ENCODE measurements at regions of chr9 and their contacts with region 1.

Region 1: GRCh38 chr9:129549685-129550084 is 71.2 kb downstream of the C9orf50 start:
- DNase-seq: peak; percentile 63

Region 2: GRCh38 chr9:129139993-129140396 is 409.7 kb before region 1 on chr9:
- in situ Hi-C with region 1: loop called (anchors 10 kb)
- DNase-seq: peak; percentile 95

Region 3: DNA sequence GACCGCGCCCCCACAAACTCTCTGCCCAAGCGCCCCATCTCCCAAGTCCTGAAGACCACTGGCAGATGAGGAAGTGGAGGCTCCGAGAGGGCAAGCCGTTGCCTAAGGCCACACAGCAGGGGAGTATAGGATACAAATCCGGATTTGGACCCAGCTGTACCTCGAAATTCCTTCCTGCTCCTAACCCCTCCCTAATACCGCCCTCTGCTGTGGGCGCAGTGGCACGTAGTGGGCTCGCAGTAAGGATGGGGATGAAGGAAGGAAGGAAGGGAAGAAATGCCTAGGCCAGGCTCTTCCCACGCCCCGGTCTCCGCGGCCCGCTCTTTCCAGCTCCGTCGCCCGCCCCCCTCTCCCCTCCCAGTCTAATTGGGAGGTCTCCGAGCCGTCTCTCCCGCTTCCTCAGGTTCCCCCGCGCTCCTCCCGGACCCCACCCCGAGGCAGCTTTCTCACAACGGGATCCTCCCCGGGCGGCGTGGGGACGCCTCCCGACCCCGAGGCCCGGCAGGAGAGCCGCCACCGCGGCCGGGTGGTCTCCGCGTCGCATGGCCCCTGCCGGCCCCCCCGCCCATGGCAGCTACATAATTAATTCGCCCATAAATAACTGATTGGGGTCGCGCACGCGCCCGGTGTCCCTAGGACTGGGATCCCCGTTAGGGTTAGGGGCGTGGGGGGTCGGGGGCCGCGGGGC is 67.7 kb before region 1 on chr9:
- in situ Hi-C with region 1: no loop called
- DNase-seq: no peak